ENCODE measurements at regions of chr2 and their contacts with region 1.

Region 1: DNA sequence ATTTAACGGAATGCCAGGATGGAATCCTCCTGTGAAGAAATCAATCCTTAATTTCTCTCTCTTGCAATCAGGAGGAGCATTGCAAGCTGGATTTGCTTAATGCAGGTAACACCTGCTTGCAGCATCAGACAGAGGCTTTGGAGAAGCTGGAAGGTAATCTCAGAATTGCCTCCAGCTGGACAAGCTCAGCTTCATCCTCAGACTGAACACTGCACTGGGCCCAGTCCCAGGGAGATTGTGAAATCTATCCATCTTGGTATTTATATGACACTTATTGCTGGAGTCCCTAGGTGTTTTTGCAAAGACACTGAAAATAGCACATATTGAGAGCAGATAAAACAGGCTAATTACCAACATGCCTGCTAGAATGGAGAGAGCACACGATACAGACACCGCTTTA is 179.4 kb upstream of the SESTD1 start:
- DNase-seq: no peak
- ATAC-seq: no peak
- H3K4me3 ChIP-seq: no peak overlapping the region
- H3K27ac ChIP-seq: no peak overlapping the region
- H3K4me1 ChIP-seq: no peaks in the 10 kb centered on the region
- H3K27me3 ChIP-seq: no peaks in the 10 kb centered on the region; the same call in 1 of the 2 replicates
- CTCF ChIP-seq: no peak

Region 2: DNA sequence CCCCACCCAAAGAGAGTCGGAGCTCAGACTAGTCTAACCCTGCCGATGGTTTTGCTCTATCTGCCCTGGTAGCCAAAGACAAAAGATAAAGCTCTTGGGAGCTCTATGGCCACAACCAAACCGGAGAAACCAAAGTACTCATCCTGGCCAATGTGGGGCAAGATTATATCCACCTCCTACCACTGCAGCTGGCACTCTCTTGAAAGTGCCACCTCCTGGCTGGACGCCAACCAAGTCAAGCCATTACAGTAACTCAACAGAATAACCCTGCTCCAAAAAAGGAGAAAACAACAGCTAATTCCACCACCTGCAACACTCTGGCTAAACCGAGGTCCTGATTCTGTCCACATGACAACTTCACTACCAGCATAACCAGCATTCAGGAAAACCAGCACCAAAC is 237.0 kb before region 1 on chr2:
- CTCF ChIA-PET with region 1: no interaction called
- POLR2A ChIA-PET with region 1: interaction called, 12 read pairs
- in situ Hi-C with region 1: no loop called
- intact Hi-C with region 1: no loop called
- DNase-seq: no peak
- ATAC-seq: no peak
- H3K4me3 ChIP-seq: no peak overlapping the region
- H3K27ac ChIP-seq: no peak overlapping the region
- H3K4me1 ChIP-seq: no peaks in the 10 kb centered on the region
- H3K27me3 ChIP-seq: no peaks in the 10 kb centered on the region
- CTCF ChIP-seq: no peak

Region 3: DNA sequence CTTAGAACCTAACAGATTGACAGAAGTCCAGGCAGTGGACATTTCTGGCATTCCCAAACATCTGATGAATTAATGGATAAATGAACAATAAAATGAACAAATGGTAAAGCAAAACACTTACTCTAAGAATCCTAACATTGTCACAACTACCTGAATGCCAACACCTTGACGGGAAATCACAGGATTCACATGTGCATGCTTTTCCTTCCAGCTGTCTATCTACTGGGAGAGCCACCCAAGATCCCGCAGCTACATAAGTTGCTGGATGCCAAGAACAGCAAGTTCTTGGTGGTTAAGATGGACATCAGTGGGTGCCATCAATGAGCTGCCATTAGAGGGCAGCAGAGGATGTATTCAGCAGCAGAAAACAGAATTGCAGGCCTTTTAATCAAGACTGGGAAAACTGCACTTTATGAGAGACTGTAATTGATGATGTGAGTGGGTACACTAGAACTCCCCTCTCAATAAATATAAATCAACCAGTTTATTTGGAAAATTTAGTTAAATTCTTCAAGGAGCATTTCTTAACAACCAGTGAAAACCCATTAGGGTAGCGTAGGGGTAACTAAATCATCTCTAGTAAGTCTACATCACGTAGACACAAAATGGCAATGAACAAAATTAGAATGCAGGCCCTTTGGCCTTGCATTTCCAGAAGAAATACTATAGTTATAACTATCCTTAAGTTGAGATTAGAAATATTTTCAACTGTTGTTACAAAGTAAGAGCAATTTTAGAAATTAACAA is 225.0 kb before region 1 on chr2:
- CTCF ChIA-PET with region 1: no interaction called
- POLR2A ChIA-PET with region 1: no interaction called
- in situ Hi-C with region 1: no loop called
- intact Hi-C with region 1: loop called (anchors 2 kb)
- DNase-seq: peak; percentile 66
- ATAC-seq: peak; percentile 90
- H3K4me3 ChIP-seq: no peak overlapping the region
- H3K27ac ChIP-seq: no peak overlapping the region
- H3K4me1 ChIP-seq: no peaks in the 10 kb centered on the region
- H3K27me3 ChIP-seq: no peaks in the 10 kb centered on the region
- CTCF ChIP-seq: peak; percentile 91

Region 4: GRCh38 chr2:179344280-179344964 is 99.6 kb before region 1 on chr2:
- CTCF ChIA-PET with region 1: no interaction called
- POLR2A ChIA-PET with region 1: no interaction called
- in situ Hi-C with region 1: no loop called
- intact Hi-C with region 1: no loop called
- DNase-seq: no peak
- ATAC-seq: no peak
- H3K4me3 ChIP-seq: no peak overlapping the region
- H3K27ac ChIP-seq: peak overlapping the region; percentile 14
- H3K4me1 ChIP-seq: peaks cover 3% of the 10 kb centered on the region; the same call in 1 of the 2 replicates
- H3K27me3 ChIP-seq: no peaks in the 10 kb centered on the region
- CTCF ChIP-seq: no peak

Region 5: GRCh38 chr2:179422037-179422643 is 21.9 kb before region 1 on chr2:
- CTCF ChIA-PET with region 1: no interaction called
- POLR2A ChIA-PET with region 1: no interaction called
- in situ Hi-C with region 1: no loop called
- intact Hi-C with region 1: no loop called
- DNase-seq: peak; percentile 30
- ATAC-seq: peak; percentile 84
- H3K4me3 ChIP-seq: no peak overlapping the region
- H3K27ac ChIP-seq: no peak overlapping the region
- H3K4me1 ChIP-seq: no peaks in the 10 kb centered on the region
- H3K27me3 ChIP-seq: no peaks in the 10 kb centered on the region
- CTCF ChIP-seq: peak; percentile 84